CD14-positive monocyte (primary cell): ENCODE measurements at regions of chr1 and their contacts with region 1.

Region 1: GRCh38 chr1:63522891-63523728 is at the starts of genes EFCAB7 and ITGB3BP:
- DNase-seq: peak; percentile 90 to 91 (median 90)
- H3K4me3 ChIP-seq: peak within 1 kb of the TSS; percentile 45 to 93 (median 62)
- H3K4me3 Mint-ChIP-seq: peak within 1 kb of the TSS; percentile 91 to 97
- H3K27ac ChIP-seq: peak within 1 kb of the TSS; percentile 84 to 98
- H3K27ac Mint-ChIP-seq: peak within 1 kb of the TSS; percentile 95 to 99 (median 98)
- H3K4me1 ChIP-seq: peaks cover 9 to 18% of the 10 kb centered on the region in 2 donors
- H3K4me1 Mint-ChIP-seq: peaks cover 19% of the 10 kb centered on the region
- H3K27me3 ChIP-seq: no peaks in the 10 kb centered on the region
- H3K27me3 Mint-ChIP-seq: no peaks in the 10 kb centered on the region
- CTCF ChIP-seq: no peak
- polyA plus RNA-seq, gene EFCAB7: 0.37 to 2.2 (median 0.92) TPM
- polyA plus RNA-seq, gene ITGB3BP: 5.2 to 7.0 (median 6.6) TPM

Region 2: DNA sequence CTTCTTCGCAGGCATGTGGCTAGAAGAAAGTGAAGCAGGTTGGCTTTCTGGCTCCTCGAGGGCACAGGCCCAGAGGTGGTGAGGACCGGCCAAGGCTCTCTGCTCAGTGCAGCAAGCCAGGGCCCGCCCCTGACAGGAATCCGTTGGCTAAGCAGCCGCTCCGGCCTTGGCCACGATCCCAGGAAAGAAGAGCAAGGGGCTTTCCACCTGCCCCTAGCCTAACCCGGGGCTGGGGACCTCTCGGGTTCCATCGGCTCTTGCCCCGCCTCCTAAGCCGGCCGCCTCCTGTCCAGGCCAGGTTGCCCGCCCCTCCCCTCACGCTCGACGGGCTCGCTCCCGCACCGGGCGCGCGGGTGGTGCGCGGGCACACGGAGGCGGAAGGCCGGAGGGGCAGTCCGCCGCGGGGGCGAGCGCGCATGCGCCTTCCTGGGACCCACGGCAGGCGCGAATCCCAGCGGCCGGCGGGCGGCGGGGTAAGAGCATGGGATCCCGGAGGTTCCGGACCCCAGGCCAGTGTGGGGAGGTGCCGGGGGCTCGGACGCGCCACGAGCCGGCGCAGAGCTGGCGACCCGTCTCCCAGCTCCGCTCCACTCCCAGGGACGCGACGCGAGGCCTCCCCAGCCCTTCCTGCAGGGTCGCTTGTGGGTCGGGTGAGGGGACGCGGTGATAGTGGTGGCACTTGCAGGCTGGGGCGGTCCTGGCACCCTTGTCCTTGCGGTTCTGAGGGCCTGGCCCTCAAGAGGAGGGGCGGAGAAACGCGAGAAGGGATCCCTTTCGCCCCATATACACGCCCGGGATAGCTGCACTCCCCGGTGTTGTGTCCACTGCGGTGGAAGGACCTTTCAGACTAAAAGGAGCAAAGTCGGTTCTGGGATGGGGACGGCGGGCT is 155.7 kb before region 1 on chr1 and contains the start of gene ALG6:
- intact Hi-C with region 1: loop called in 1 of 2 experiments (anchors 10 kb)
- DNase-seq: peak; percentile 89 to 91 (median 90)
- H3K4me3 ChIP-seq: peak within 1 kb of the TSS; percentile 67 to 95 (median 90)
- H3K4me3 Mint-ChIP-seq: peak within 1 kb of the TSS; percentile 97 to 98
- H3K27ac ChIP-seq: peak within 1 kb of the TSS; percentile 44 to 82
- H3K27ac Mint-ChIP-seq: peak within 1 kb of the TSS; percentile 68 to 93 (median 84)
- H3K4me1 ChIP-seq: peaks cover 15 to 18% of the 10 kb centered on the region in 2 donors
- H3K4me1 Mint-ChIP-seq: peaks cover 17% of the 10 kb centered on the region
- H3K27me3 ChIP-seq: no peaks in the 10 kb centered on the region
- H3K27me3 Mint-ChIP-seq: peaks cover 3 to 17% (median 7%) of the 10 kb centered on the region in 3 donors
- CTCF ChIP-seq: no peak
- polyA plus RNA-seq, gene ALG6: 9.3 to 24.7 (median 20.2) TPM